ACHN (cell line): ENCODE measurements at regions of chr4 and their contacts with region 1.

Region 1: DNA sequence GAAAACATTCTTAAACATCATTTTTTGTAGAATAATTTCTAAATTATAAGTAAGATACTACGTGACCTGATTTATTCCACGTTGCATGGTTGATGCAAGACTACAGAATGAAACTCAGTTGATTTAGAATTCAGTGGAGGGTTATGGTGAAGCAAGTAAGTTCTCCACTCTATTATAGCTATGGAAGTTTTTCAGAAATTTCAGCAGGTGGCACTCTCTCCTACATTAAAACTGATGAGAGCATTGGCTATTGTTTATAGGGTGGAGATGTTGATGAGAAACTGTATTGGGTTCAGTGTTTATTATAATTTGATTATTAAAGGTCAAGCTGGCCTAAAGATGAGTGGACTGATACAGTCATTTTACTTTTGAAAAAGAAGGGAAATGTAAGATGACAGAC is 88.0 kb downstream of the FNIP2 start:
- DNase-seq: peak; percentile 47

Region 2: GRCh38 chr4:159175085-159175988 is 318.5 kb after region 1 on chr4:
- in situ Hi-C with region 1: loop called (anchors 25 kb)
- DNase-seq: peak; percentile 74